SK-N-SH (cell line): ENCODE measurements at regions of chr10 and their contacts with region 1.

Region 1: GRCh38 chr10:110258542-110258941 is 46.2 kb downstream of the SMNDC1 start:
- DNase-seq: no peak
- H3K4me3 ChIP-seq: no peak overlapping the region
- H3K27ac ChIP-seq: no peak overlapping the region
- H3K4me1 ChIP-seq: no peaks in the 10 kb centered on the region; a peak in 1 of 4 replicates
- H3K27me3 ChIP-seq: no peaks in the 10 kb centered on the region
- CTCF ChIP-seq: no peak
- EP300 ChIP-seq: no peak
- RAD21 ChIP-seq: no peak

Region 2: DNA sequence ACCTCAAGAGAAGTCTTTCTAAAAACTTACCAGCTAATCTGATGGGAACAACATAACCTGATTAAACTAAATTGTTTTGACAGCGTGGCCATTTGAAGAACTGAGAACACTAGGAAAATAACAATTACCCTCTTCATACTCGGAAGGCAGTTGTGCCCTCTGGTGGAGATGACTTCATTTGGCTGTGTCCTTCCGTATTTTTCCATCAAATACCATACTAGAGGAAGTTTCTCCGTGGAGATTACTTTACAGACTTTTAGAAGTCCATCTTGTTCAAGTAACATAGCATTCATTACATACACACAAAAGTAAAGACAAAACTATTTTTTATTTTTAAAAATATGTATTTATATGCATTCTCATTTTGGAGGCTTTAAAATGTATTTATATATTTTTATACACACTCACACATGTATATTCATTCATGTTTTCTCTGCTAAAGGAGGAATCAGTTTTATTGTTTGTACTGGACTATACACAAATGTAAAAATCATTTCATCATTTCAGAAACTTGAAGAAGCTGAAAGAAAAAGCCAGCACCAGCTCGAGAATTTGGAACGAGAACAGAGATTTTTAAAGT is 21.0 kb after region 1 on chr10:
- CTCF ChIA-PET with region 1: interaction called, 13 read pairs
- POLR2A ChIA-PET with region 1: no interaction called
- DNase-seq: peak; percentile 54
- H3K4me3 ChIP-seq: no peak overlapping the region
- H3K27ac ChIP-seq: no peak overlapping the region
- H3K4me1 ChIP-seq: peaks cover 3 to 5% of the 10 kb centered on the region in 2 experiments; a peak in 1 of 4 replicates
- H3K27me3 ChIP-seq: no peaks in the 10 kb centered on the region
- CTCF ChIP-seq: peak; percentile 86
- EP300 ChIP-seq: no peak
- RAD21 ChIP-seq: peak; percentile 88